ENCODE measurements at regions of chr5 and their contacts with region 1.

Region 1: DNA sequence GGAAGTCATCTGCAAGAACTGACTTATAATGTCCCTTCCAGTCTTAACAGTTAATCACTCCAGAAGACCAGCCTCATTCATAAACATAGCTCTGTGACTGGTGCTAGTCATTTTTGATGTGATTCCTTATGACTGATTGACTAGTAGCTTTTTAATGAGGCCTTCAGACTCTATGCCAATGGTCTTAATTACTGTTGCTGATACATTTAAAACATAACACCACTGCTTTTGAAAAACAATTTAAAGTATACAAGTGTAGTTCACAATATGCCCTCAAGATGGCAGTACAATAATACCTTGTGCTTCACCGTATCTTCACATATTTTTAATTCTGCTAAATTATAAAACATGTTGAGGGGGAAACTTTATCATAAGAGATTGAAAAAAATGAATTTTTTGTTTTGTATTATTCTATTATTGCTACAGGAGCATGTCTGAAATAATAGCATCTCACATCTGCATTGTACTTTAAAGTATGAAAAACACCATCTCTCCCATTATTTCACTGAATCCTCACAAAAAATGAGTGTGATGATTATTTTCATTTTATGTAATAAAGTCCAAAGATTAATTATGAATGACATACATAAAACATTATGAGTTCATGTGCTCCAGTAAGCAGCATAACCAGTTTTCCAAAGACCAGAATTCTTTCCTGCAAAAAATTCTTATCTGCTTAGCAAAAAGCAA is 55.2 kb upstream of the SHISAL2B start:
- DNase-seq: no peak
- H3K4me3 ChIP-seq: no peak overlapping the region
- H3K27ac ChIP-seq: no peak overlapping the region
- H3K4me1 ChIP-seq: no peaks in the 10 kb centered on the region
- H3K27me3 ChIP-seq: no peaks in the 10 kb centered on the region
- CTCF ChIP-seq: peak in 5 of 6 experiments; percentile 60 to 80 (median 68)
- POLR2A ChIP-seq: no peak

Region 2: GRCh38 chr5:64497386-64497785 is 137.8 kb before region 1 on chr5:
- intact Hi-C with region 1: no loop called
- DNase-seq: no peak
- H3K4me3 ChIP-seq: no peak overlapping the region
- H3K27ac ChIP-seq: no peak overlapping the region
- H3K4me1 ChIP-seq: no peaks in the 10 kb centered on the region
- H3K27me3 ChIP-seq: no peaks in the 10 kb centered on the region
- CTCF ChIP-seq: no peak
- POLR2A ChIP-seq: no peak

Region 3: DNA sequence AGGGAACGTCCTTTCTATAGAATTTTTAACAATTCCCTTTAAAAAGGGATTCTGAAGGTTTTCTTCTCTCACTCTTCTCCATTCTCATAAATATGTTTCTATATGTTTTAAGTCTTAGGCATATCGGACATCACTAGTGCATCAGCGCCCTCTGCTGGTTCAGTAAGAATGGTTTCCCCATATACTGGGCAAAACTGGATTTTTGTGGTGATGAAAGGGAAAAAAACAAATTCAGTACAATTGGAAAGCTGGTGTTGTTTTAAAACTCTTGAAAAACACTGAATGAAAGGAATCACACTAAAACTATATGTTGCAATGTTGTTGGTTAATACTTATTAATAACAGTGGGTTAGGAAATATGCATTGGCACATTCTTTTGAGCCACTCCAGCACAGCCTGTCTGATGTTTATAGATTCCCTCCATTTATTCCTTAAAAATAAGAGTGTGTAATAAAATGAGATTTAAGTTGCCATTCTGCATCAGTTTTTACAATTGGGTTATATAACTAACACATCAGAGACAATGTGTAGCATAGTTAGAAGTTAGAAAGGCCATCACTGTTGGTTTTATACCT is 149.4 kb after region 1 on chr5:
- intact Hi-C with region 1: loop called (anchors 5 kb)
- DNase-seq: peak; percentile 66 to 74
- H3K4me3 ChIP-seq: no peak overlapping the region
- H3K27ac ChIP-seq: no peak overlapping the region
- H3K4me1 ChIP-seq: no peaks in the 10 kb centered on the region
- H3K27me3 ChIP-seq: no peaks in the 10 kb centered on the region
- CTCF ChIP-seq: peak in 5 of 6 experiments; percentile 58 to 80 (median 73)
- POLR2A ChIP-seq: no peak

Region 4: DNA sequence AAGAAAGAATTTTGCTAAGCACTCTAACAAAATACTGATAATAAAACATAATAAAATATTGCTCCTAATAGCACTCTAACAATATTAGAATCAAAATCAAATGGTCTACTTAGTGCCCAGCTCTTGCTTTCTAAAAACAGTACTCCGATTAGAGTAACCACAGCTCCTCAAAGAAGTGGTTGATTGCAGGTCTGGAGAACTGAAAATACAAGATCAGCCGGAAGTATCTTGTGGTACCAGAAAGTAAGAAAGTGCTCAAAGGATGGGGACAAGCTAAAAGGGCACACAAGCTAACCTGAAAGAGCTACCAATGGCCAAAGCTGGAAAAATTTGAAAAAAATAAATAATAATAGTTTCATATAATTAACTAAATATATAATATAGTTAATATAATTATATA is 252.8 kb after region 1 on chr5:
- intact Hi-C with region 1: no loop called
- DNase-seq: no peak
- H3K4me3 ChIP-seq: no peak overlapping the region
- H3K27ac ChIP-seq: no peak overlapping the region
- H3K4me1 ChIP-seq: no peaks in the 10 kb centered on the region
- H3K27me3 ChIP-seq: no peaks in the 10 kb centered on the region
- CTCF ChIP-seq: no peak
- POLR2A ChIP-seq: no peak